Right ventricle myocardium inferior (tissue), 1 donor: ENCODE measurements at regions of chr11 and their contacts with region 1.

Region 1: GRCh38 chr11:44861849-44862749 is 88.6 kb downstream of the TP53I11 start:
- DNase-seq: peak; percentile 77
- ATAC-seq: peak; percentile 80

Region 2: GRCh38 chr11:44775366-44775984 is 86.6 kb before region 1 on chr11:
- intact Hi-C with region 1: no loop called
- DNase-seq: peak; percentile 67
- ATAC-seq: peak; percentile 27

Region 3: DNA sequence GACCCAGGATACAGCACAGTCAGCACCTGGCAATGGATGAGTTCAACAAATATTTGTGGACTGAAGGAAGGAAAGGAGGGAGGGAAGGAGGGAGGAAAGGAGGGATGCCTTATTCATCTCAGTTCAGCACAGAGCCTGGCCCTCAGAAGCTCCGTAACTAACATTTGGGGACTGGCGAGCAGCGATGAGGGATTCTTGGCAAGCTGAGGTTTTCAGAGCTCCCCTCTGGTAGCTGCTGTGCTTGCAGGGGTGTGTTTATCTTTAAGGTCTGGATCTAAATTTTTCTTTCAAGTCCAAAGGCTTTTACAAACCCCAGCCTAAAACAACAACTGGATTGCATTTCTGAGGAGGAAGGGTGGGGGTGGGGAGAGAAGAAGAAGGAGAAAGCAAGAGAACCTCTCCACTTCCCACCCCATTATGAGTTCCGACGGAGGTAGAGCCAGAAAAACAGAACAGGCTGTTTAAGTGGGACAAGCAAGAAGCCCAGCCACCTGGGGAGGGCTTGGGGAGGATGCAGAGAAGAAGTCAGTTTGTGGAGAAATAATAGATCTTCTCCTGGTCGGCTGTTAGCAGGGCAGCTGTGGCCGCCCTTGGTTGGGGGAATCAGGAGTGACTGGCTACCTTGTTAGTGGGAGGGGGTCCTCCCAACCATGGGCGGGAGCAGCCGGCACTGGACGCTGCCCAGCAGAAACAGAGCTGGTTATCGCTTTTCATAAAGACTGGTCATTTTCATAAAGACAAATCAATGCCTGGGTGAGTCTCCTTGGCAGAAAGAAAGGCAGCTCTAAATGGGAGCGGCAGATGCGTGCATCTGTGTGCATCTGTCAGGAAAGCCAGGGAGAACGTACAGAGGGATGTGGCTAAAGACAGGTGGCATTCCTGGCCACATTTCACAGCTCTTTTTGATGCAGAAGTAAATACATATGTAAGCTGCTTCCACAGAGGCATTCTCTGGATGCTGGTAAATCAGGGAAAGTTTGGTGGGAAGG is 57.4 kb before region 1 on chr11:
- intact Hi-C with region 1: no loop called
- DNase-seq: no peak
- ATAC-seq: peak; percentile 33

Region 4: GRCh38 chr11:44814881-44815592 is 47.1 kb before region 1 on chr11:
- intact Hi-C with region 1: loop called (anchors 5 kb)
- DNase-seq: no peak
- ATAC-seq: no peak

Region 5: GRCh38 chr11:44831605-44832394 is 30.3 kb before region 1 on chr11:
- intact Hi-C with region 1: no loop called
- DNase-seq: no peak
- ATAC-seq: no peak

Region 6: DNA sequence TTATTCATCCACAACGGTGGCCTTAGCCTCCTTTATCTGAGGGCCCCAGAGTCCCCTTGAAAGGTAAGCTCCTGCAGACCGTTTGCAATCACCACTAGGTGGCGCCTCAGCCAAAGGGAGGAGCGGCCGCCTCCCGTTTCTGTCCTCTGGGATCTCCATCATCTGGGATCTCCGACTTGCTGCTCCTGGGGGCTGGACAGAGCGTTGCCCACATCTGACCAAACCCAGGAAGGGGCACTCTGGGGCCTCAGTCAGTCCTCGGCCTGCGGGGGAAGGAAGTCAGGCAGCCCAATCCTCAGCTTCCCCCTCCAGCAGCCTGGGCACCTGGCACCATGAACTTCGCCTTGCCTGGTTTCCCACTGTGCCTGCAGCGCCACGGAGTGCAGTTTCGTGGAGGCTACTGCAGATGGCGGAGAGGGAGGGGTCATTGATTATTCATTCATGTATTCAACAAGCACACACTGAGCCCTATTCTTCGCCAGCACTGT is 65.1 kb after region 1 on chr11:
- intact Hi-C with region 1: no loop called
- DNase-seq: no peak
- ATAC-seq: peak; percentile 30